ENCODE measurements at regions of chrX and their contacts with region 1.

Region 1: DNA sequence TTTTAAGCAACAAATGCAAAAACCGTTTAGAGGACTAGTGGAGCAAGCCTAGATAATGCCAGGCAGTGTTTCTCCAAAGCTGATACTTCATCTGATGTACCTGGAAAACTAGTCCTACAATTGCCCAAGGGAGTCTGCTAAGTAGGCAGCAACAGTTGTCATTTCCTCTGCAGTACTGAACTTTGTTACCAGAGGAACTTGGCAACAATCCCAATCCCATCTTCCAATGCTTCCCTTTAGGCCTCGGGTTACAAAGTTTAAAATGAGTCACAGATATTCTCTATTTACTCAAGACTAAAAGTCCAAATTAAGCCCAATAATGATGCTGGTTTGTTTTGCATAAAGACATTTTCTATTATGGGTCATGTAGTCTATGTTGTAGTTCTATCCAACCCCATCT is 120.0 kb upstream of the GLRA2 start:
- DNase-seq: peak; percentile 19
- H3K4me3 Mint-ChIP-seq: no peak overlapping the region
- H3K27ac Mint-ChIP-seq: no peak overlapping the region
- H3K4me1 Mint-ChIP-seq: peaks cover 33% of the 10 kb centered on the region
- H3K27me3 Mint-ChIP-seq: no peaks in the 10 kb centered on the region
- CTCF ChIP-seq: no peak

Region 2: GRCh38 chrX:13923845-13924244 is 485.5 kb before region 1 on chrX:
- CTCF ChIA-PET with region 1: no interaction called
- intact Hi-C with region 1: no loop called
- DNase-seq: no peak
- H3K4me3 Mint-ChIP-seq: no peak overlapping the region
- H3K27ac Mint-ChIP-seq: no peak overlapping the region
- H3K4me1 Mint-ChIP-seq: no peaks in the 10 kb centered on the region
- H3K27me3 Mint-ChIP-seq: no peaks in the 10 kb centered on the region
- CTCF ChIP-seq: no peak

Region 3: GRCh38 chrX:14362721-14363120 is 46.6 kb before region 1 on chrX:
- CTCF ChIA-PET with region 1: no interaction called
- intact Hi-C with region 1: loop called (anchors 5 kb)
- DNase-seq: no peak
- H3K4me3 Mint-ChIP-seq: no peak overlapping the region
- H3K27ac Mint-ChIP-seq: no peak overlapping the region
- H3K4me1 Mint-ChIP-seq: peaks cover 25% of the 10 kb centered on the region
- H3K27me3 Mint-ChIP-seq: no peaks in the 10 kb centered on the region
- CTCF ChIP-seq: no peak

Region 4: GRCh38 chrX:14851526-14851925 is 442.2 kb after region 1 on chrX:
- CTCF ChIA-PET with region 1: no interaction called
- intact Hi-C with region 1: no loop called
- DNase-seq: no peak
- H3K4me3 Mint-ChIP-seq: no peak overlapping the region
- H3K27ac Mint-ChIP-seq: no peak overlapping the region
- H3K4me1 Mint-ChIP-seq: peaks cover 20% of the 10 kb centered on the region
- H3K27me3 Mint-ChIP-seq: no peaks in the 10 kb centered on the region
- CTCF ChIP-seq: no peak

Measured in Calu3 (cell line).